ENCODE measurements at regions of chr7 and their contacts with region 1.

Region 1: DNA sequence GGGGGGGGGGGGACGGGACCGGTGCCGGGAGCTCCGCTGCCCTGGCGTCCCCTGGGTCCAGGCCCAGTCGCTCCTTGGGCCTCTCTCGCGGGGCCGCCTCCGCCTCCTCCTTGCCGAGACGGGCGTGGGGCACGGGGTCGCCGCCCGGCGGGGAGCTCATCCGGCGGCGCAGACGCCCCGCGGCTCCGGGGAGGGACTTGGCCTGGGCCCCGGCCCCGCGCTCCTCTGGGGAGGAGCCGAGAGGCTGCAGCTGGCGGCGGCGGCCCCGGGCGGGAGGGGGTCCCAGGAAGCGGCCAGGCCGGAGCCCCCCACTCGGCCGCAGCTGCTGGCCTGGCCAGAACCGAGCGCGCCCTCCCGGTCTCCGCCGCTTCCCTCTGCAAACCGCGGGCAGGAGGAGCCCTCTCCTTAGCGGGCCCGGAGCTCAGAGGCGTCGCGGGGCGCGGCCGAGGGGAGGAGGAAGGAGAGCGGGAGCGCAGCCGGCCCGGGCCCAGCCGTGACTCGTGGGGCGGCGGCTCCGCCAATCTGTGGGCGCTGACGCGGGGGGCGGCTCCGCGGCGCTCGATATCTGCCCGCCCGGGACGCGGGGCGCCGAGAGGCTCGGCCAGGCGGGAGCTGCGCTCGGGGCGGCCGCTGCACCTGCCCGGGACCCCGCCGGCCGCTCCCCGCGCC is at the start of gene FAM20C:
- DNase-seq: peak; percentile 80 to 83
- ATAC-seq: peak; percentile 67 to 68
- H3K4me3 ChIP-seq: peak within 1 kb of the TSS; percentile 61 to 89 (median 68)
- H3K27ac ChIP-seq: peak within 1 kb of the TSS; percentile 85 to 98 (median 91)
- H3K4me1 ChIP-seq: peaks cover 51 to 52% of the 10 kb centered on the region in 2 donors
- H3K27me3 ChIP-seq: no peaks in the 10 kb centered on the region
- CTCF ChIP-seq: no peak
- POLR2A ChIP-seq: peak; percentile 94 to 96
- total RNA-seq, gene FAM20C: 9.6 to 35.3 (median 18.6) TPM

Region 2: DNA sequence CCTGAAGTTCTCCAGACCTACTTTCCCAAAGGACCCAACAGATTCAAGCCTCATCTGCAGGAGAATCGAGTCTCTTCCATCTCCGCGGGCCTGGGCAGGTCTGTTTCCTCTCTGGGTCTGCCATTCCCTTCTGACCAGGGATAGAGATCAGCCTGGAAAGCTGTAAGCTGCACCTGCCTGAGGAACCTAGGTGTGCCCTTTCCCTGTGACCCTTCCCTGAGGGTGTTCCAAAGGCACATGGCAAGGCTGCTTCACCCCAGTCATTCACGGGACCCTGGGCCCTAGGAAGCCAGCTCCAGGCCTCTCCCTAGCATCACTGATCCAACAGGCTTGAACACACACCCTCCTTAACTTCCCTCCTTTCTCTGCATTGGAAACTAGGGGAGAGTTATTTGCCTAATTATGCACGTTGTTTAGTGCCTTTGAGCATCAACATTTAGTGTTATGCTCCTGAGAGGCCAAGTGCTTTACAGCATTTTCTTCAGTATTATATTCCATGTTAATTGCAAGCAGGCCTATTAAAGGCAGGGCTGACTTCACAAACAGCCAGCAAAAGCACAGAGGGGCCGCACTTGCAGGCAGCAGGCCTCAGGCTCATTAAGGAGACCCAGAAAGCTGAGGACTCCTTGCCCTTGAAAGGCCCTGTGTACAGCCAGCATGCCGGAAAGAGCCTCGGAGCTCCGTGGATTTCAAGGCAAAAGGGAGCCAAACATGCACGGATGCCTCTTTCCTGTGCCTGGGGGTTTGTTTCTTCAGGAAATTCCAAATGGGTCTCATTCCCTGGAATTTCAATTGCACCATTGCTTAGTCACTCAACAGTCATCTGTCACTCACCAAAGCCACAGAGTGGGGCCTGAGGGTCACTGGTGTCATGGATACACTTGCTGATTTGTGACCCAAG is 90.7 kb before region 1 on chr7:
- in situ Hi-C with region 1: no loop called
- intact Hi-C with region 1: no loop called
- DNase-seq: no peak
- ATAC-seq: no peak
- H3K4me3 ChIP-seq: no peak overlapping the region
- H3K27ac ChIP-seq: no peak overlapping the region
- H3K4me1 ChIP-seq: no peaks in the 10 kb centered on the region
- H3K27me3 ChIP-seq: no peaks in the 10 kb centered on the region
- CTCF ChIP-seq: no peak
- POLR2A ChIP-seq: no peak

Region 3: GRCh38 chr7:214410-215212 is 22.5 kb after region 1 on chr7:
- in situ Hi-C with region 1: no loop called
- intact Hi-C with region 1: no loop called
- DNase-seq: no peak
- ATAC-seq: peak; percentile 33 to 53
- H3K4me3 ChIP-seq: no peak overlapping the region
- H3K27ac ChIP-seq: peak overlapping the region; percentile 13 to 62 (median 56)
- H3K4me1 ChIP-seq: peaks cover 14 to 28% of the 10 kb centered on the region in 2 donors
- H3K27me3 ChIP-seq: no peaks in the 10 kb centered on the region
- CTCF ChIP-seq: no peak
- POLR2A ChIP-seq: no peak

Region 4: DNA sequence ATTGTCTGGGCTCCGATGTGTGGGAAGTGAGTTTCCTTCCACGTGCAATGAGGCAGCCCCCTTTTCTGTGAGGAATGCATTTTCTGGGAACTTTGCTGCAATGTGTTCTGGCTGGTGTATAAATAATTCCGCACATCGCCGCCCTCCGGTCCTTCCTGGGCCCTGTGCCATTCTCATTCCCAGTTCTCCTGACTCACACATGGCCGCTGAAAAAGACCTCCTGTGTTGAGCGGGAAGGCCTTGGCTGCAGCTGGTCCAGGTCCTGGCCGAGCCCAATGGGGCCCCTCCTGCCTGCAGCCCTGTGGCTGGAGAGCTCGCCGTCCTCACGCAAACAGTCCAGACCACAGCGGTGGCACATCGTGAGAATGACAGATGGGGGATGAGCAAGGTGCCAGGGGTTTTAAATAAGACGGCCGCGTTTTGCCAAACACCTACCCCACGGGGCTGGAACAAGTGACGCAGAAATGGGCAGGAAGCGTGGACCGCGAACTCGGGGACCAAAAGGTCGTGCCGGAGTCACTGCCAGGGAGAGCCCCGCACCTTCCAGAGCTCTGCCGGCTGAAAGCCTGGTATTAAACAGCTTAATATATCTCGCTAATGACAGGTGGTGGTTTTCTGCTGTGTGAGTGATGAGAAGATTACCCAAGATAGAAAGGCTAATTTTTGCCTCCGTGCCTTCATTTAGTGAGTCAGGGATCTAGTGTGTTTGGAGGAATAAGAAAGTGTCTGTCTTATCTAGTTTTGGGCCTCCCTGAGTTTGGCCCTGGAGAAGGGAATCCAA is 37.3 kb after region 1 on chr7:
- in situ Hi-C with region 1: no loop called
- intact Hi-C with region 1: loop called (anchors 1 kb)
- DNase-seq: peak; percentile 56 to 73
- ATAC-seq: peak; percentile 61 to 62
- H3K4me3 ChIP-seq: peak overlapping the region; percentile 0 to 47 (median 25)
- H3K27ac ChIP-seq: peak overlapping the region; percentile 92 to 96 (median 92)
- H3K4me1 ChIP-seq: peaks cover 60 to 80% of the 10 kb centered on the region in 2 donors
- H3K27me3 ChIP-seq: no peaks in the 10 kb centered on the region
- CTCF ChIP-seq: no peak
- POLR2A ChIP-seq: peak; percentile 37 to 43